ENCODE measurements at regions of chr17 and their contacts with region 1.

Region 1: DNA sequence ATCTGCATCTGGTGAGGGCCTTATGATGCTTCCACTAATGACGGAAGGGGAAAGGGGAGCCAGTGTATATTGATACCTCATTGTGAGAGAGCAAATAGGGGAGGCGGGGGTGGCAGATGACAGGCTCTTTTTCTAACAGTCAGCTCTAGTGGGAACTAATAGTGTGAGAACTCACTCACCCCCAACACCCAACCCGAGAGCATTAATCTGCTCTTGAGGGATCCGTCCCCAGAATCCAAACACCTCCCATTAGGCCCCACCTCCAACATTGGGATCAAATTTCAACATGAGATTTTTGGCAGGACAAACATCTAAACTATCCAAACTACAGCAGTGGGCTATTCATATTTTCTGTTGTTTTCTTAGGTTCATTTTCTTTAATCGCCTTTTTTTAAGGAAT is 54.4 kb downstream of the BPTF start:
- DNase-seq: no peak
- ATAC-seq: no peak
- H3K4me3 Mint-ChIP-seq: no peak overlapping the region
- H3K27ac Mint-ChIP-seq: no peak overlapping the region
- H3K4me1 Mint-ChIP-seq: peaks cover 1% of the 10 kb centered on the region
- H3K27me3 Mint-ChIP-seq: no peaks in the 10 kb centered on the region
- CTCF ChIP-seq: no peak

Region 2: GRCh38 chr17:67841992-67842391 is 37.7 kb before region 1 on chr17:
- CTCF ChIA-PET with region 1: interaction called, 3 read pairs
- POLR2A ChIA-PET with region 1: no interaction called
- intact Hi-C with region 1: loop called (anchors 5 kb)
- DNase-seq: no peak
- ATAC-seq: no peak
- H3K4me3 Mint-ChIP-seq: no peak overlapping the region
- H3K27ac Mint-ChIP-seq: no peak overlapping the region
- H3K4me1 Mint-ChIP-seq: peaks cover 45% of the 10 kb centered on the region
- H3K27me3 Mint-ChIP-seq: no peaks in the 10 kb centered on the region
- CTCF ChIP-seq: no peak

Measured in activated B cell treated with CpG ODN at 0.5 μM for 24 hours (primary cell).